ENCODE measurements at regions of chr2 and their contacts with region 1.

Region 1: DNA sequence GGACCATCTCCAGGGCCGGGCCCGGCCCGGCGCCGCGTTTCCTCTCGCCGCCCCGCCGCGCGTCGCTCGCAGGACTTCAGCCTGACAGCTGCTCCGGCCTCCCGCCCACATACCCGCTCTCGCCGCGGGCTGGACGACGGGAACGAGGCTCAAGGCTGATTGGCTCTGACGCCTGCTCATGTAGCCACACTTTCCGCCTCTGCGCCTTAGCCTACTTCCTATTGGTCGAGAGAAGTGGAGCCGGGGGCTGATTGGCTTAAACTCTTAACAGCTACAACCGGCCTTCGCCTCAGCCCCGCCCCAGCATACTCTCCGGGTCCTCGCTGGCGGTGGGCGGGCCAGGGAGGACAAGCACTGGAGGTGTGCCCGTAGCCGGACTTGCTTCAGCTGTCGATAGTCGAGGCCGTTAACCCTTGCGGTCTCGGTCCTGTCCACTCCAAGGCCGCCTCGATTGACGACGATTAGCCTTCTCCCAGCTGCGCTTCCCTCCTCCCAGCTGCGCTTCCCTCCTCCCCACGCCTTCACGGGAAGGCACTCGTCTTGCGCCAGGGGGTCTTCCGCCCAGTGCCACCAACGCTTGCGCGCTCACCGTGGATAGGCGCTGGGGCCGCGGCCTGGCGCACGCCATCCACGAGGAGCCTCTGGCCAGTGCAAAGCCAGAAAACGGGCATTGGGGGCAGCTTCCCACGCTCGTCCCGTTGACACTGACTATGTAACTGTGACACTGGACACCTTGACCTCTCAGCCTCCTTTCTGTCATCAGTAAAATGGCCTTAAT is at the start of gene PRADC1:
- DNase-seq: peak; percentile 98 to 99
- ATAC-seq: peak; percentile 98
- H3K4me3 ChIP-seq: peak within 1 kb of the TSS; percentile 43 to 58
- H3K27ac ChIP-seq: peak within 1 kb of the TSS; percentile 12 to 78
- H3K4me1 ChIP-seq: no peaks in the 10 kb centered on the region
- H3K27me3 ChIP-seq: no peaks in the 10 kb centered on the region
- total RNA-seq, gene PRADC1: 12.4 to 15.9 TPM

Region 2: GRCh38 chr2:73385595-73386341 is 152.4 kb after region 1 on chr2 and contains the start of gene ALMS1:
- intact Hi-C with region 1: loop called in 1 of 2 experiments (anchors 5 kb)
- DNase-seq: peak; percentile 94 to 95
- ATAC-seq: peak; percentile 98
- H3K4me3 ChIP-seq: peak within 1 kb of the TSS; percentile 66 to 93
- H3K27ac ChIP-seq: peak within 1 kb of the TSS in 1 of 2 donors; percentile 72
- H3K4me1 ChIP-seq: peaks cover 2 to 4% of the 10 kb centered on the region in 2 donors
- H3K27me3 ChIP-seq: no peaks in the 10 kb centered on the region
- total RNA-seq, gene ALMS1: 24.5 to 26.4 TPM

Region 3: DNA sequence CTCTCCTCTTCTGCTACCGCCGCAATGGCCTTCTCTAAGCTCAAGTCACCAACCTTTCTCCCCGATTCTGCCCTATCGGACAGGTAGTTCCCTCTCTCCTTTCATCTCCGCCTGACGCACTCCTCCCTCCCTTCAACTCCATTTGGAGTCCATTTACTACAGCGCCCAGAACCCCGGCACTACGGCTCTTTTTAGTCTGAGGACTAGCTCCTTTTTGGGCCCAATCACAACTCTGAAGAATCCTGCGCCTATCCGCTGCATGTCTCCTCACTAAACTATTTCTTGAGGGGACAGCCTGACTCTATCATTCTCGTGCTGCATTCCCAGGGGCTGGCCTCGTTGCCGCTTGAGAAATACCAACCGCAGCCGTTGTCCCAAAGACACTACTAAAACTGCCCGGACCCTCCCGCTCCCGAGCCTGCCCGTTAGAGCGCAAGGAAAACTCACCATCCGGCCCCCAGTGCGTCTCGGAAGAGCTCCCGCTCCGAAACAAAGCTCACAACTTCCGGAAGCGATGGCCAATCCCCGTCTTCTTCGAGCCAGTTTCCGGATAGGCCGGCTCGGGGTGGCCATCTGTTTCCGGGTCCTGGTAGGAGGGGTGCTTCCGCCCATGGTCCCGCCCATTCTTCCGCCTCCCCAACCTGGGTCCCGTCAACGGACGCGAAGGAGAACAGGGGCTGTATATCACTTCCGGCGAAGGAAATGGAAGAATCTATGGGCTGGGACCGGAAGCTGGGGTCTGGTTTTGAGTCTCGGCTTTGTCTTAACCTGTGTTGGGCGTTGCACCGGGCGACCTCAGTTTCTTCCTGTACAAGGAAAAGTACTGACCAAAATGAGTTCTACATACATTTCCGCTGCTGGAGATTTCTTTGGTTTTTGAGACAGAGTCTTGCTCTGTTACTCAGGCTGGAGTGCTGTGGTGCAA is 503.8 kb after region 1 on chr2 and contains the start of gene TPRKB:
- intact Hi-C with region 1: loop called in 1 of 2 experiments (anchors 5 kb)
- DNase-seq: peak; percentile 97 to 98
- ATAC-seq: peak; percentile 99
- H3K4me3 ChIP-seq: peak within 1 kb of the TSS; percentile 53 to 82
- H3K27ac ChIP-seq: peak within 1 kb of the TSS in 1 of 2 donors; percentile 9
- H3K4me1 ChIP-seq: peaks cover 0 to 3% of the 10 kb centered on the region in 2 donors
- H3K27me3 ChIP-seq: no peaks in the 10 kb centered on the region
- total RNA-seq, gene TPRKB: 21.3 to 24.1 TPM